Right cardiac atrium (tissue), 5 donors: ENCODE measurements at regions of chr17 and their contacts with region 1.

Region 1: GRCh38 chr17:59004338-59005111 is 102.2 kb downstream of the TRIM37 start:
- DNase-seq: peak; percentile 32 to 67 (median 53)
- ATAC-seq: peak; percentile 66 to 67
- H3K4me3 ChIP-seq: no peak overlapping the region
- H3K27ac ChIP-seq: no peak overlapping the region
- H3K4me1 ChIP-seq: no peaks in the 10 kb centered on the region
- H3K27me3 ChIP-seq: no peaks in the 10 kb centered on the region

Region 2: GRCh38 chr17:58587702-58588254 is 416.7 kb before region 1 on chr17:
- intact Hi-C with region 1: loop called in 2 of 4 experiments (anchors 5 kb)
- DNase-seq: peak; percentile 31 to 74 (median 65)
- ATAC-seq: peak; percentile 63 to 81
- H3K4me3 ChIP-seq: no peak overlapping the region
- H3K27ac ChIP-seq: no peak overlapping the region
- H3K4me1 ChIP-seq: no peaks in the 10 kb centered on the region
- H3K27me3 ChIP-seq: no peaks in the 10 kb centered on the region

Region 3: DNA sequence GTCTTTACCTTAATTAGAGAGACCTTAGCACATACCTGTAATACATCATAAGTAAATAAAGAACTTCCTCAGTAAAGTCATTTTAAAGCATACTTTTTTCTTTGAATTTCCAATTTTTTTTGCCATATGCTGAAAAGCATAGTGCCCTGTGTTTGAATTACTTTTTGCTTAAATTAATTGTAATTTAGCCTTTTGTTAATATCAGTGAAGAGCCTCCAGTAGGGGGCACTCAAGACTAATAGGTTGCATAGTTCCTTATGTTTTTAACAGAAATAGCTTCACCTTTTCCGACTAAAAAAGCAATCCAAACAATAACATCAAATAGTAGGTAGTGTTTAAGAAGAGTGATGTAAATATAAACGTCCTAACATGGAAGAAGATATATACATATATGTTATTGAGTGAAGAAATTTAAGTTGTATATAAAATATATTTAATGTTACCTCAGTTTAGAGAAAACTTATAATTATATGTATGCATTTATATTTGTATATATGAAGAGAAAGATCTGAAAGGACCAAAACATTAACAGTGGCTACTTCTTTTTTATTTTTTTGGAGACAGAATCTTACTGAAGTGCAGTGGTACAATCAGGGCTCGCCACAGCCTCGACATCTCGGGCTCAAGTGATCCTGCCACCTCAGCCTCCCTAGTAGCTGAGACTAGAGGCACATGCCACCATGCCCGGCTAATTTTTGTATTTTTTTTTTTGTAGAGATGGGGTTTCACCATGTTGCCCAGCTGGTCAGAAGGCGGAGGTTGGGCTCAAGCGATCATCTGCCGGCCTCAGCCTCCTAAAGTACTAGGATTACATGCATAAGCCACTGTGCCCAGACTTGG is 293.4 kb before region 1 on chr17:
- intact Hi-C with region 1: loop called (anchors 2 to 10 kb)
- DNase-seq: no peak
- ATAC-seq: no peak
- H3K4me3 ChIP-seq: no peak overlapping the region
- H3K27ac ChIP-seq: no peak overlapping the region
- H3K4me1 ChIP-seq: no peaks in the 10 kb centered on the region
- H3K27me3 ChIP-seq: no peaks in the 10 kb centered on the region

Region 4: GRCh38 chr17:59056857-59057256 is 52.3 kb after region 1 on chr17:
- intact Hi-C with region 1: no loop called
- DNase-seq: no peak
- ATAC-seq: no peak
- H3K4me3 ChIP-seq: no peak overlapping the region
- H3K27ac ChIP-seq: no peak overlapping the region
- H3K4me1 ChIP-seq: no peaks in the 10 kb centered on the region
- H3K27me3 ChIP-seq: no peaks in the 10 kb centered on the region